Caco-2 (cell line): ENCODE measurements at regions of chrX and their contacts with region 1.

Region 1: GRCh38 chrX:20362268-20363267 is 95.9 kb upstream of the RPS6KA3 start:
- DNase-seq: peak; percentile 50 to 67
- H3K4me3 ChIP-seq: peak overlapping the region; percentile 17
- H3K4me3 Mint-ChIP-seq: peak overlapping the region; percentile 75
- H3K27ac Mint-ChIP-seq: peak overlapping the region; percentile 84
- H3K4me1 ChIP-seq: peaks cover 19% of the 10 kb centered on the region
- H3K4me1 Mint-ChIP-seq: peaks cover 26% of the 10 kb centered on the region
- H3K27me3 ChIP-seq: no peaks in the 10 kb centered on the region
- H3K27me3 Mint-ChIP-seq: no peaks in the 10 kb centered on the region
- CTCF ChIP-seq: no peak

Region 2: GRCh38 chrX:20135944-20136343 is 226.6 kb before region 1 on chrX:
- CTCF ChIA-PET with region 1: no interaction called
- POLR2A ChIA-PET with region 1: interaction called, 19 read pairs
- intact Hi-C with region 1: no loop called
- DNase-seq: no peak
- H3K4me3 ChIP-seq: no peak overlapping the region
- H3K4me3 Mint-ChIP-seq: no peak overlapping the region
- H3K27ac Mint-ChIP-seq: peak overlapping the region; percentile 3
- H3K4me1 ChIP-seq: peaks cover 21% of the 10 kb centered on the region
- H3K4me1 Mint-ChIP-seq: peaks cover 11% of the 10 kb centered on the region
- H3K27me3 ChIP-seq: no peaks in the 10 kb centered on the region
- H3K27me3 Mint-ChIP-seq: no peaks in the 10 kb centered on the region
- CTCF ChIP-seq: no peak

Region 3: DNA sequence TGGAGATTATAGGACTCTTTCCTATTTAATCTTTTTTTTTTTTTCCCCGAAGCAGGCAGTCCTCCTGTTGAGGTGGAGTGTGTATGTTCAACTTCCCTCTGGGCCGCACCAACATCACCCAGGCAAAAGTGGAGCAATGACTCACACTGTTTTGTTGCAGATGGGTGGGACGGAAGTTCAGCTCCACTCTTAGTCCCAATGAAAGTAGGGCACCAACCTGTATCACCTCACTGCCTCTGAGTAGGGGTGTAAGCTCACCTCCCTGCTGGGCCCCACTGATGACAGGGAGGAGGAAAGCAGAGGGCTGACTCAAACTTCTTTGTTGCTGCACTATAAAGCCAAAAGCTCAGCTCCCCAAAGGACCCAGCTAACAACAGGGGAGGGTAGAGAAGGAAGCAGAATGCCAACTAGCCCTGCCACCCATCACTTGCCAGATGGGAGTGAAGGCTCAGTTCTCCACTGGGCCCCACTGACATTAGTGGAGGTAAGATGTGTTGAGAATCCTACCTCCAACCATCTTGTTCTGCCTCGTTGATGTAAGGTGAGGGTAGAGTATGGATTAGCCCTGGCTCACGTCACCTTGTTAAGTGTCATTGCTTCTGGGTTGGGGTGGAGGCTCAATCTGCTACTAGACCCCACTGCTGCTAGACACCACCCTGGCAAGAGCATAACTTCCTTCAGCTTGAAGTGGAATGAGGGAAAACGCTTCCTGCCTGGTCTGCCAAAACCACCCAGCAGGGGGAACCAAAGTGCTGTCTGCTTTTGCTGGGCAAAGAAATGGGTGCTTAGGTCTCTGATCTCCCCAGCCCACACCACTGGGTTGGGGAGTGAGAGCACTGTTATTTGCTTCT is 110.0 kb before region 1 on chrX:
- CTCF ChIA-PET with region 1: interaction called, 6 read pairs
- POLR2A ChIA-PET with region 1: no interaction called
- intact Hi-C with region 1: loop called (anchors 1 kb)
- DNase-seq: peak; percentile 43 to 76
- H3K4me3 ChIP-seq: no peak overlapping the region
- H3K4me3 Mint-ChIP-seq: no peak overlapping the region
- H3K27ac Mint-ChIP-seq: peak overlapping the region; percentile 66
- H3K4me1 ChIP-seq: 0 out of 2 replicates have a peak, but pooled peaks cover 5% of the 10 kb centered on the region
- H3K4me1 Mint-ChIP-seq: no peaks in the 10 kb centered on the region
- H3K27me3 ChIP-seq: no peaks in the 10 kb centered on the region
- H3K27me3 Mint-ChIP-seq: no peaks in the 10 kb centered on the region
- CTCF ChIP-seq: peak; percentile 44 to 50

Region 4: GRCh38 chrX:20266810-20267606 is 95.6 kb before region 1 on chrX and contains the start of gene RPS6KA3:
- CTCF ChIA-PET with region 1: no interaction called
- POLR2A ChIA-PET with region 1: interaction called, 17 read pairs
- intact Hi-C with region 1: loop called (anchors 1 kb)
- DNase-seq: peak; percentile 89 to 92
- H3K4me3 ChIP-seq: peak within 1 kb of the TSS; percentile 77
- H3K4me3 Mint-ChIP-seq: peak within 1 kb of the TSS; percentile 96
- H3K27ac Mint-ChIP-seq: peak within 1 kb of the TSS; percentile 93
- H3K4me1 ChIP-seq: peaks cover 28% of the 10 kb centered on the region
- H3K4me1 Mint-ChIP-seq: peaks cover 14% of the 10 kb centered on the region
- H3K27me3 ChIP-seq: no peaks in the 10 kb centered on the region
- H3K27me3 Mint-ChIP-seq: no peaks in the 10 kb centered on the region
- CTCF ChIP-seq: no peak
- total RNA-seq, gene RPS6KA3: 93.2 and 104 TPM in 2 replicates

Region 5: DNA sequence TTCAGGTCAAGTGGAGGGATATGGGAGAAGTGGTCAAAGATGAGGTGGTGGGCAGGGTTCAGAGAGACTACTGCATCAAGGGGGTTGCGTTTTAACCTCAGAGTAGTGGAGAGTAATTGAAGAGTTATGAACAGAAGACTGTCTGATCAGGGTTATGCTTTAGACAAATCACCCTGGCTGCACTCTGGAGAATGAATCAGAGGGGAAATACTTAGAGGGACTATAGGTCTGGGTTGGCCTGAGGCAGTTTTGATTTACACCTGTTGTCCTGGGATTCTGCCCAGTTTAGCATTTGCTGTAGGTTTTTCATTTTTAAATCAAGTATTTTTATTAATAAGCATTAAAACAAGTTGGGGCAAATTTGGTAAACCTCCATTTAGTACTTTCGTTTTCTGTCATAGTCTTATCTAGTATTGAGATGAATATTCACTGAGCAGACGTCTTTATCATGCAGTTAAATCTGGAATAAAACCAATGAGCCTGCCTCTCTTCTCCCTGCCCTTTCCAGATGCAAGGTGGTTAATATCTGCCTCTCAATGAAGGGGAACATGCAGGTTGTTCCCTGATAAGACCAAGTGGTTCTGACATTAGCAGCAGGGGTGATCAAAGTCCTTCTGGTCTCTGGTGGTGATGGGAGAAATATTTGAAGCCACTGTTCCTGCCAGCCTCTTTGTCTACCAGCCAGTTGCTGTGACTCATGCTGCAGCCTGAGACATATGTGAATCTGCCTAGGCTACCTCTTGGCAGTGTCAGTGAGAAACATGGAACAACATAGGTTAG is 20.1 kb after region 1 on chrX:
- CTCF ChIA-PET with region 1: no interaction called
- POLR2A ChIA-PET with region 1: no interaction called
- intact Hi-C with region 1: loop called (anchors 2 kb)
- DNase-seq: peak in 1 of 2 experiments; percentile 52
- H3K4me3 ChIP-seq: no peak overlapping the region
- H3K4me3 Mint-ChIP-seq: no peak overlapping the region
- H3K27ac Mint-ChIP-seq: no peak overlapping the region
- H3K4me1 ChIP-seq: peaks cover 31% of the 10 kb centered on the region
- H3K4me1 Mint-ChIP-seq: peaks cover 27% of the 10 kb centered on the region
- H3K27me3 ChIP-seq: no peaks in the 10 kb centered on the region
- H3K27me3 Mint-ChIP-seq: no peaks in the 10 kb centered on the region
- CTCF ChIP-seq: no peak

Region 6: DNA sequence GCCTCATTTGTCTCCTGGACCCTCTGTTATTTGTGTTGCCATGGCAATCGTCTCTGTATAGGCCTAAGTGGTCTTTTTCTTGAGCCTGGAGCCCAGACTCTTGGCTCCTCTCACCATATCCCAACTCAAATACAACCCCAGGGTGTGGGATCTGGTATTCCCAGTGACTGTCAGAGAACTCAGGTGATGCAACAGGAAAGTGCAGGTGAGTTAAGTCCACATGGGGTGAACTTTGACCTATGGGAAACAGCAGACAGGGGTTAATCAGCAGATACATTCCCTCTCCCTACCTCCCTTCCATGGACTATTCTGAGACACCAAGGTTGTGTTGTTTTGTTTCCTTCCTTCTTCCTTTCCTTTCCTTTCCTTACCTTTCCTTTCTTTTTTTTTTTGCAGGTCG is 35.0 kb after region 1 on chrX:
- CTCF ChIA-PET with region 1: no interaction called
- POLR2A ChIA-PET with region 1: no interaction called
- intact Hi-C with region 1: loop called (anchors 5 kb)
- DNase-seq: peak; percentile 45 to 55
- H3K4me3 ChIP-seq: no peak overlapping the region
- H3K4me3 Mint-ChIP-seq: no peak overlapping the region
- H3K27ac Mint-ChIP-seq: peak overlapping the region; percentile 77
- H3K4me1 ChIP-seq: peaks cover 21% of the 10 kb centered on the region
- H3K4me1 Mint-ChIP-seq: peaks cover 15% of the 10 kb centered on the region
- H3K27me3 ChIP-seq: no peaks in the 10 kb centered on the region
- H3K27me3 Mint-ChIP-seq: no peaks in the 10 kb centered on the region
- CTCF ChIP-seq: no peak

Region 7: GRCh38 chrX:20477836-20478524 is 115.4 kb after region 1 on chrX:
- CTCF ChIA-PET with region 1: no interaction called
- POLR2A ChIA-PET with region 1: no interaction called
- intact Hi-C with region 1: loop called (anchors 2 kb)
- DNase-seq: peak; percentile 26 to 44
- H3K4me3 ChIP-seq: no peak overlapping the region
- H3K4me3 Mint-ChIP-seq: no peak overlapping the region
- H3K27ac Mint-ChIP-seq: peak overlapping the region; percentile 81
- H3K4me1 ChIP-seq: peaks cover 55% of the 10 kb centered on the region
- H3K4me1 Mint-ChIP-seq: peaks cover 23% of the 10 kb centered on the region
- H3K27me3 ChIP-seq: no peaks in the 10 kb centered on the region
- H3K27me3 Mint-ChIP-seq: no peaks in the 10 kb centered on the region
- CTCF ChIP-seq: no peak